Activated CD4-positive, alpha-beta memory T cell treated with anti-CD3 and anti-CD28 coated beads for 36 hours (primary cell): ENCODE measurements at regions of chr5 and their contacts with region 1.

Region 1: DNA sequence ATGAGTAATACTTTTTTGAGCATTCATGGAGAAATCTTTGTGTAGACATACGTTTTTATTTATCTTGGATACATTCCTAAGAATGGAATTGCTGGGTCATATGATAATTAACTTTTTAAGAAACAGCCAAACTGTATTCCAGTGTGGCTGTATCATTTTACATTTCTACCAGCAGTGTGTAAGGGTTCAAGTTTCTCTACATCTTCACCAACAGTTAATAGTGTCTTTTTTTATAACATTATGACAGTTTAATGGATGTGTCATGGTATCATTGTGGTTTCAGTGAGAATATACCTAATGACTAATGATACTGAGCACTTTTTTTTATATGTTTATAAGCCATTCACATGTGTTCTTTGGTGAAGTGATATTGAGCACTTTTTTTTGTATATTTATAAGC is 52.4 kb downstream of the NIPBL start:
- DNase-seq: no peak
- H3K4me3 Mint-ChIP-seq: no peak overlapping the region
- H3K27ac Mint-ChIP-seq: no peak overlapping the region
- H3K4me1 Mint-ChIP-seq: peaks cover 62% of the 10 kb centered on the region
- H3K27me3 Mint-ChIP-seq: no peaks in the 10 kb centered on the region

Region 2: GRCh38 chr5:36915653-36916052 is 13.3 kb before region 1 on chr5:
- CTCF ChIA-PET with region 1: no interaction called
- POLR2A ChIA-PET with region 1: no interaction called
- intact Hi-C with region 1: loop called (anchors 2 kb)
- DNase-seq: no peak
- H3K4me3 Mint-ChIP-seq: no peak overlapping the region
- H3K27ac Mint-ChIP-seq: no peak overlapping the region
- H3K4me1 Mint-ChIP-seq: peaks cover 31% of the 10 kb centered on the region
- H3K27me3 Mint-ChIP-seq: no peaks in the 10 kb centered on the region